Activated naive CD4-positive, alpha-beta T cell treated with anti-CD3 and anti-CD28 coated beads for 36 hours (primary cell): ENCODE measurements at regions of chr19 and their contacts with region 1.

Region 1: DNA sequence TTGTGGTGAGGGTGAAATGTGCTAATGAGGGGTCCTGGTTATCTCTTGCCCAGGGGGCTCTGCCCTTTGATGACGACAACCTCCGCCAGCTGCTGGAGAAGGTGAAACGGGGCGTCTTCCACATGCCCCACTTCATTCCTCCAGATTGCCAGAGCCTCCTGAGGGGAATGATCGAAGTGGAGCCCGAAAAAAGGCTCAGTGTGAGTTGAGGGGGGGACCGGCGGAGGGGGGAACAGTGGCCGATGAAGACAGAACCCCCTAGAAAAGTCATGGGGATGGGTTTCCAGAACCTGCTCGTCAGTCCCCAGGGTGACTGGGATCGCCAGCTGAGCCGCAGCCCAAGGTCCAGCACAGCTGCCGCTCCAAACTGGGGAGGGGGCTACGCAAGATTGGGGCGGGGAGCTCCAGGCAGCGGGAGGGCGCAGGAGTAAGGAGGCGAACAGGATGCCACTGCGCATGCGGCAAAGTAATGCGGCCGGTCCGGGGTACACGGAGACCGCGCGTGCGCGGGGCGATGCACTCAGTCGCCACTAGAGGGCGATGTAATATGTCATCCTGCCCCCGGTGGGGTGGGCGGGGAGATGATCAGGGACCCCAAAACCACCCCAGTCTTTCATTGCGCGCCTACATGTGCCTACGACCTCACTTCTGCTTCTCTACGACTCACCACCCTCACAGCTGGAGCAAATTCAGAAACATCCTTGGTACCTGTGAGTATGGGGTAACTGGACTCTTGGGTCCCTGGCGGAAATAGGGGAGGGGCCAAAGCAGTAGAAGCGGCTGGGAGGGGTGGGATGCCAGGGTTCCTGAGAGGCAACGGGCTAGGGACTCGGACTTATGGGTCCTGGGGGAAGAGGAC is 17.9 kb downstream of the BRSK1 start:
- DNase-seq: peak; percentile 96
- H3K4me3 Mint-ChIP-seq: peak overlapping the region; percentile 78
- H3K27ac Mint-ChIP-seq: peak overlapping the region; percentile 86
- H3K4me1 Mint-ChIP-seq: peaks cover 7% of the 10 kb centered on the region
- H3K27me3 Mint-ChIP-seq: no peaks in the 10 kb centered on the region

Region 2: GRCh38 chr19:55289117-55289796 is 12.4 kb before region 1 on chr19:
- CTCF ChIA-PET with region 1: interaction called, 28 read pairs
- intact Hi-C with region 1: no loop called
- DNase-seq: no peak
- H3K4me3 Mint-ChIP-seq: no peak overlapping the region
- H3K27ac Mint-ChIP-seq: no peak overlapping the region
- H3K4me1 Mint-ChIP-seq: peaks cover 4% of the 10 kb centered on the region
- H3K27me3 Mint-ChIP-seq: no peaks in the 10 kb centered on the region

Region 3: GRCh38 chr19:55353803-55354697 is 52.4 kb after region 1 on chr19:
- CTCF ChIA-PET with region 1: interaction called, 7 read pairs
- intact Hi-C with region 1: loop called (anchors 5 kb)
- DNase-seq: peak; percentile 76
- H3K4me3 Mint-ChIP-seq: peak overlapping the region; percentile 73
- H3K27ac Mint-ChIP-seq: no peak overlapping the region
- H3K4me1 Mint-ChIP-seq: peaks cover 15% of the 10 kb centered on the region
- H3K27me3 Mint-ChIP-seq: peaks cover 49% of the 10 kb centered on the region